ENCODE measurements at regions of chr20 and their contacts with region 1.

Region 1: DNA sequence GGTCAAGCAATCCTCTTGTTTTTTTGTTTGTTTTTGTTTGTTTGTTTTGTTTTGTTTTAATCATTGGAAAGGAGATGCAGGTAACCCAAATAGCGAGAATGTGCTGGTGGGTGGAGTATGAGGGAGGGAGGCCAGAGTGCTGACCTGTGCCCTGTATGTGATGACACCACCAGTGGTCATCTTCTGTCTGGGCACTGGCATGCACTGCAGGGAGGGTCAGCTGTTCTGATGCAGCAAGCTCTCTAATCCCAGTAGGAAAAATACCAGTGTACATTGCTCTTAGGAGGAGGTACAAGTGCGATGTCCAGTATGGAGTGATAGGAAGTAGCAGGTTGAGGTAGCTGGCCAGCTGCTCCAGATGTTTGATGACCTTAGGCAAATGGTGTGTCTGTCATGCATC is 2.9 kb upstream of the CST1 start:
- DNase-seq: no peak
- ATAC-seq: no peak
- H3K4me3 Mint-ChIP-seq: no peak overlapping the region
- H3K27ac Mint-ChIP-seq: no peak overlapping the region
- H3K4me1 Mint-ChIP-seq: peaks cover 60% of the 10 kb centered on the region
- H3K27me3 Mint-ChIP-seq: peaks cover 98% of the 10 kb centered on the region
- CTCF ChIP-seq: no peak

Region 2: DNA sequence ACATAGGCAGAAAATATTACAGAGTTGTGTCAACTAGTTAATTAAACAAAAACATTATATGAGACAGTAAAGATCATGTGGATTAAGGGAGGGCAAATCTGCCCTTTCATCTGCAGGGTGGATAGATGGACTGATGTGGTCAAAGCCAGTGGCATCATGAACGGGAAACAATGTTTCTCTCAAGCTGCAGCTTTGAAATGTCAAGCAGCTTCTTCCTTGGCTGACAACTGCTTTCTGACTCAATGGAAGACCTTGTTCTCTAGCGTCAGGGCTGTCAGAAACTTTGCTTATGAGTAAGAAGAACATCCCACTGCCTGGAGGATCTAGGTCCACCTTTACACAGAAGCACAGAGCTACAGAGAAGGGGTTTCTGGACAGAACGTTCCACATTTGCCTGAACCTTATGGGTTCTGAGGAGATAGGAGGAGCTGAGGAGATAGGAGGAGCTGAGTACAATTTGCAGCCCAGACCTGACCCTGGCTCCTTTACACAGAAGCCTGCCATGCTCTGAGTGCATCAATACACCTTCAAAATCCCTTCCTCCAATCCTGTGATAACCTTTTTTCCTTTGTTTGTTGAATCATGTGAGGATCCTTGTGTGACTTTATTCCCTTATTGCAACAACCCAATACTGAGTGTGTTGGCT is 119.9 kb after region 1 on chr20:
- CTCF ChIA-PET with region 1: no interaction called
- POLR2A ChIA-PET with region 1: interaction called, 12 read pairs
- DNase-seq: no peak
- ATAC-seq: no peak
- H3K4me3 Mint-ChIP-seq: no peak overlapping the region
- H3K27ac Mint-ChIP-seq: no peak overlapping the region
- H3K4me1 Mint-ChIP-seq: peaks cover 64% of the 10 kb centered on the region
- H3K27me3 Mint-ChIP-seq: peaks cover 12% of the 10 kb centered on the region
- CTCF ChIP-seq: no peak

Region 3: DNA sequence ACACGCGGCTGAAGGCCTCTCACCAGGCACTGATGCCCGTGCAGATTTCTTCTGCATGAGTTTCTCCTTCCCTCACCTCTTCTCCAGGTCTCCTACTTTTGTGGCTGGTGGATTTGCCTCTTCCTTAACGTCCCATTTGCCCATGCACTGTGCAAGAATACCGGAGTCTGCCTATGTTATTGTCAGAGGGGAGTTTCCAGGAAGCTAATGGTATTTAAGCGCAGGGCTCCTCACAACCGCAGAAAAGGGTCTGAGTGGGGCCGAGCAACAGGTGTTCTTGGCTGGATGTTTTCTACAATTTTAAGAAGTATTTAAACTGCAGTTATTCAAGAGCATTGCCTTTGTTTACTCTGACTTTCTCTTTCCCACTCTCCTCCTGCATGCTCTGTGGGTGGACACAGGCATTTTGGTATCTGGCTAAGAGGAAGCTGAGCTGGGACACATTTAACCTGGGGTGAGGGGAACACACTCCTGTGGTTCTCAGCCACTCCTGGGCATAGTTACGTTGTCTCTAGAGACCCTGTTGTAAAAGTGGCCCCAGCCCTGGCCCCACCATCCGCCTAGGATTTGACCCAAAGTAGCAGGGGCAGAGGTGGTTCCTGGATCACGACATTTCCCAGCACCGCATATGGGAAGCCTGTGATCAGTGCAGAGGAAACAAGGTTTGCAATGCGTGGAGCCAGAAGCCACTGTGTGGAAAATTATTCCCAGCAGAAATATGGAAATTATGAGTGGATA is 200.6 kb after region 1 on chr20:
- CTCF ChIA-PET with region 1: no interaction called
- POLR2A ChIA-PET with region 1: no interaction called
- DNase-seq: no peak
- ATAC-seq: no peak
- H3K4me3 Mint-ChIP-seq: no peak overlapping the region
- H3K27ac Mint-ChIP-seq: no peak overlapping the region
- H3K4me1 Mint-ChIP-seq: peaks cover 31% of the 10 kb centered on the region
- H3K27me3 Mint-ChIP-seq: no peaks in the 10 kb centered on the region
- CTCF ChIP-seq: no peak

Measured in WTC11 (cell line).